ENCODE measurements at regions of chr3 and their contacts with region 1.

Region 1: DNA sequence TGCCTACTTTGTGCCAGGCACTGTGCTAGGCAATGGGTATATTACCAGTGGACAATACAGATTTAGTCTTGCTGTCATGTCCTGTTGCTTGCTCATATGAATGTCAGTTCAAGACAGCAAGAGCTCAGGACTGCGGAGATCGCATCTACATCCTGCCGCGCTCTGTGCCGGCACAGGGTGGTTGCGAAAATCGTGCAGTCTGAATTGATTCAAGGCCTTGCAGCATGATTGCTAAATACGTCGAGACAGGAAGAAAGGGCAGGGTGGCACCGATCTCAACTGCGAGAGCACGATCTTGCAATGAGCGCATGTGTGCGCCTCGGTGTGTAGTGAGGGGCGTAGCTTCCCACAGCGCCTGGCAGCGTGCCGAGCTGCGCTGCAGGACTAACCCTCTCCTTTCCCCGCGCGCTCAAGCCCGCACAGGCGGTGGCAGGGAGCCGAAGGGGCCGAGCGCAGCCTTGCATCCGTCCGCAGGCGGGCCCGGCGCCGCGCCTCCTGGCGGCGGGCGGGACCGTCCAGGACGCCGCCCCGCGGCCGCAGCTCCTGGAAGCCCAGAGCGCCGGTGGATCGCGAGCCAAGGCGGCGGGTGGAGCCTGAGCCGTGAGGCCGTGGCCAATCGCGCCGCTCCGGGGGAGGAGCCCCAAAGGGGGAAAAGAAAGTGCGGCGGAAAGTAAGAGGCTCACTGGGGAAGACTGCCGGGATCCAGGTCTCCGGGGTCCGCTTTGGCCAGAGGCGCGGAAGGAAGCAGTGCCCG is at the start of gene IL1RAP:
- DNase-seq: peak; percentile 81 to 89
- ATAC-seq: peak; percentile 93 to 97
- H3K4me3 ChIP-seq: peak within 1 kb of the TSS; percentile 85
- H3K27ac ChIP-seq: peak within 1 kb of the TSS; percentile 77 to 88
- H3K4me1 ChIP-seq: peaks cover 39% of the 10 kb centered on the region
- CTCF ChIP-seq: peak; percentile 52
- EP300 ChIP-seq: no peak
- POLR2A ChIP-seq: peak; percentile 69
- RAD21 ChIP-seq: peak; percentile 6 to 60; a peak in 4 of 5 replicates
- polyA plus RNA-seq, gene IL1RAP: 18.3 and 18.5 TPM in 2 replicates

Region 2: DNA sequence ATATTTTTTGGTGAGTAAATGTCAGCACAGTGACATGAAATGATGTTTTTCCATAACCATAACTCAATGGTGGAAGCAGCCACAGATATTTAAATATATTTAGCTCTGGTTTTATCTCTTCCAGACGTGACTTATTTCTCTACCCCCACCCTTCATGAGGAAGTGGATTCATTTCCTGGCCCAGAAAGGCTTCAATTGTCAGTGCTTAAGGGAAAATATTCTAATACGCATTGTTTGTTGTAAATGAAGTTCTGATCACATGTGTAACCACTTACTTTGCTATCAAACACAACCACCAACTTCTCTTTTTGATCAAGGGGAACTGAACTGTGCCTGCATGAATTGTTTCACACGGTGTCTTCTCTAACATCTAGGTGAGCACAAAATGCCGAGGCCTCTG is 111.6 kb before region 1 on chr3:
- CTCF ChIA-PET with region 1: no interaction called
- POLR2A ChIA-PET with region 1: no interaction called
- DNase-seq: no peak
- ATAC-seq: no peak
- H3K4me3 ChIP-seq: no peak overlapping the region
- H3K27ac ChIP-seq: no peak overlapping the region
- H3K4me1 ChIP-seq: no peaks in the 10 kb centered on the region
- CTCF ChIP-seq: no peak
- EP300 ChIP-seq: no peak
- POLR2A ChIP-seq: no peak
- RAD21 ChIP-seq: no peak

Region 3: GRCh38 chr3:190526787-190527762 is 13.5 kb after region 1 on chr3:
- CTCF ChIA-PET with region 1: interaction called, 11 read pairs
- POLR2A ChIA-PET with region 1: interaction called, 31 read pairs
- DNase-seq: no peak
- ATAC-seq: peak; percentile 46 to 59; a peak in 3 of 6 replicates
- H3K4me3 ChIP-seq: no peak overlapping the region
- H3K27ac ChIP-seq: peak overlapping the region; percentile 52 to 77
- H3K4me1 ChIP-seq: peaks cover 30% of the 10 kb centered on the region
- CTCF ChIP-seq: no peak
- EP300 ChIP-seq: no peak
- POLR2A ChIP-seq: no peak
- RAD21 ChIP-seq: no peak

Region 4: DNA sequence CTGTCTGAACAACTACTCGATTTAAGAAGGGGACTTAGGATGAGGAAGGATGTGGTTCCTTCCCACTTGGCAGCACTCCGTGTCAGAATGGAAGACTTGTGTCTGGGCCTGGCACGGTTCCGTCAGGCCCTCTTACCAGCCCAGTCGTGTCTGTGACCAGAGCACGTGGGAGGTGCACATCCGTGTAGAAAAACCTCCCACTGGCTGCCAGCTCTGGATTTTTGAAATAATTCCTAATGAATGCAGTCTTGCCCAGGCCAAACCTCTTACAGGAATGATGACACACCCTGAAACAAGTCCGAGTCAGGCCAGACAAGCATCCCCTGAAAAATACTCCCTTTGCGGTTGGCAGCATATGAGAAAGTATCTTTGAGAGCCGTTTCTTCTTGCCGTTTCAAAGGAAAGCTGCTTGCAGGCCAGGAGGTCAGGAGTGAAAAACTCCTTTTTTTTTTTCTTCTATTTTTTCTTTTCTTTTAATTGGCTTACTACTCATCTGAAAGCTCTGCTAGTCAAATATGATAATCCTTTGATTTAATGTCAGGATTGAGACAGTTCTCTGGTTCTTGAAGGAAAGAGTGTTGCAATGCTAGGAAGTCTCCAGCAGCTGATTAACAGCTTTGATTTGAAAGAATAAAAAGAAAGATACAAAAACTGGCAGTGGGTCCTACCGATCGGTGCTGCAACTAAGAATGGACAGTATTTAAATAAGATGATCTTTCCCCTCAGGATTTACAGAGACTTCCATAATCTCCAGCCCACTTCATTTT is 20.1 kb after region 1 on chr3:
- CTCF ChIA-PET with region 1: interaction called, 3 read pairs
- POLR2A ChIA-PET with region 1: interaction called, 31 read pairs
- DNase-seq: peak; percentile 43 to 82
- ATAC-seq: peak; percentile 90 to 92
- H3K4me3 ChIP-seq: no peak overlapping the region
- H3K27ac ChIP-seq: peak overlapping the region; percentile 78 to 94
- H3K4me1 ChIP-seq: peaks cover 38% of the 10 kb centered on the region
- CTCF ChIP-seq: no peak
- EP300 ChIP-seq: peak in 1 of 2 experiments; percentile 74; a peak in 1 of 5 replicates
- POLR2A ChIP-seq: no peak
- RAD21 ChIP-seq: no peak; a peak in 1 of 5 replicates

Region 5: DNA sequence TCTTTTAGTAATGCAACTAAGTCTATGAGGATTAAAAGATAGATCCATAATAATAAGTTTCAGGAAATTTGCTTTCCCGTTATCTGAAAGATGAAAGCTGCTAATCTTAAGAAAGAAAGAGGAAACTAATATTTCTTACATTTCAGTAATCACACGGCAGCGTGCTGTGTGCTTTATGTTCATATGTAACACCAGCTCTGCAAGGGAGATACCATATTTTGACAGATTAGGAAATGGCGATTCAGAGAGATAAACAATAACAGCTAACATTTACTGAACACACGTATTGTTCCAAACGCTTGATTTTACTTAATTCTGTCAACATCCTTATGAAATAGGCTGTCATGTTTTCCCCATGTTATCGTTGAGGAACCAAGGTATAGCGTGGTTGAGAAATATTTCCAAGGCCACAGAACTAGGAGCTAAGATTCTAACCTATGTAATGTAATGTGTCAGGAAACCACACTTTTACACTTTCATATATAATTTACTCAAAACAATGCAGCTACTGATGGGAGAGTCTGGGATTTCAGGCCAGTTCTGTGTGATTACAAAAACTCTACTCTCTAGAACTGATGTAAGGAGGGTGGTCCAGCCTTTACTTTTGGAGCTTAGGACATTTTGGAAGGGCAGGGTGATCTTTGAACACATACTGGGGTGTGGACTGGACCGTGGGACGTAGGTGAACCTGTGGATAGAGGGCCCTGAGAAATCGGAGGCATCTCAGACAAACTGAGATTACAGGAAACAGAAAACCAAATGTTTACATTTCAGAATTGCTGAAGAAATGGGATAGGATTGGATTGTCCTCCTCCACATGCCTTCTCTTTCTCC is 100.9 kb after region 1 on chr3:
- CTCF ChIA-PET with region 1: no interaction called
- POLR2A ChIA-PET with region 1: no interaction called
- DNase-seq: no peak
- ATAC-seq: no peak
- H3K4me3 ChIP-seq: no peak overlapping the region
- H3K27ac ChIP-seq: no peak overlapping the region
- H3K4me1 ChIP-seq: peaks cover 9% of the 10 kb centered on the region; the same call in 1 of the 3 replicates
- CTCF ChIP-seq: no peak
- EP300 ChIP-seq: no peak
- POLR2A ChIP-seq: no peak
- RAD21 ChIP-seq: no peak

Measured in A549 (cell line).